ENCODE measurements at regions of chr3 and their contacts with region 1.

Region 1: GRCh38 chr3:114213627-114214541 is 23.5 kb downstream of the ZNF80 start:
- DNase-seq: peak; percentile 89
- H3K4me3 Mint-ChIP-seq: no peak overlapping the region
- H3K27ac Mint-ChIP-seq: no peak overlapping the region
- H3K4me1 Mint-ChIP-seq: peaks cover 4% of the 10 kb centered on the region
- H3K27me3 Mint-ChIP-seq: no peaks in the 10 kb centered on the region

Region 2: GRCh38 chr3:114056130-114057010 is 157.5 kb before region 1 on chr3 and contains the starts of genes CCDC191 and QTRT2:
- CTCF ChIA-PET with region 1: no interaction called
- POLR2A ChIA-PET with region 1: interaction called, 4 read pairs
- intact Hi-C with region 1: loop called (anchors 2 kb)
- DNase-seq: peak; percentile 99
- H3K4me3 Mint-ChIP-seq: peak within 1 kb of the TSS; percentile 94
- H3K27ac Mint-ChIP-seq: peak within 1 kb of the TSS; percentile 89
- H3K4me1 Mint-ChIP-seq: peaks cover 28% of the 10 kb centered on the region
- H3K27me3 Mint-ChIP-seq: no peaks in the 10 kb centered on the region
- total RNA-seq, gene CCDC191: 3.5 TPM
- total RNA-seq, gene QTRT2: 27.2 to 30.7 TPM

Region 3: GRCh38 chr3:114234745-114235144 is 20.9 kb after region 1 on chr3:
- CTCF ChIA-PET with region 1: interaction called, 5 read pairs
- POLR2A ChIA-PET with region 1: interaction called, 3 read pairs
- intact Hi-C with region 1: loop called (anchors 2 kb)
- DNase-seq: no peak
- H3K4me3 Mint-ChIP-seq: no peak overlapping the region
- H3K27ac Mint-ChIP-seq: peak overlapping the region; percentile 76
- H3K4me1 Mint-ChIP-seq: peaks cover 66% of the 10 kb centered on the region
- H3K27me3 Mint-ChIP-seq: no peaks in the 10 kb centered on the region

Region 4: DNA sequence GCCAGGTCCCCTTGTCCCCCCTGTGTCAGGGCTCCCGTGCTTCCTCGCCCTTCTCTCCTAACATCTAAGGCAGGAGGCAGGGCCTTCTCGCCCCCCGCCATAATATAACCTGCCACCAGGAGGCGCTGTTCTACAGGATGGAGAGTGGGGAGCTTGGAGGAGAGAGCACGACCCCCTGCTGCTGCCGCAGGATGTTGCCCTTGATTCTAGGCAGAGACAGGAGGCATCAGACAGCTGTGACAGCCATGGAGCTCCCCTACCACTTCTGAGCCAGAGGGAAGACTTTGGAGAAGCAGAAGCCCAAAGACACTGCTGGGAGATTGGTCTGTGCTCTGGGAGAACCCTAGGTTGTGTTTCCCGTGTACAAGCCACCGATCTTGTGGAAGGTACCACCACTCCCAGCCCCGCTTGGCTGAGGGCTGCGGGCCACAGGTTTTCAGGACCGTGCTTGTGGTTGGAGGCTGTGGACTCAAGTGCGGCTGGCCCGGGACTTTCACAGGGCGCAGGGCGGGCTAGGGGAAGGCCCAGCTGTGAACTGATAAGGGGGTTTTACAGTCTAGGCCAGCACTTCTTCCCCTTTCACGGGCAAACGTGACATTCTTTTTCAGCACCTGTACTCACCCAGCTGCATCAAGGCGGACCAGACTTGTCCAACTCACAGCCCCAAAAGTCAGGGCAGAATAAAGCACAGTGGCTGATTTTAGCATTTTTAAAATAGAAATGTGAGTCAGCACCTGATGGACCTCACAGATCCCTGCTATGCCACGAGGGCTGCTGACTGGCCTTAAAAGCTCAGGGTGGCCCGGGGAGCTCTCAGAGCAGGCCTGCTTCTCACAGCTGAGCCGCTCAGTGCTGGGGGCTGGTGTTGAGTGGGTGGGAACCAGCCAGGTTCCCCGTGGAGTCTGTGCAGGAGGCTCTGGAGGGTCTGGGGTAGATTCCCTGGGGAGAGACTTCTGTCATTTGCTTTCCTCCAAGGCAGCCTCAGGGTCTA is 77.3 kb after region 1 on chr3:
- CTCF ChIA-PET with region 1: interaction called, 37 read pairs
- POLR2A ChIA-PET with region 1: interaction called, 19 read pairs
- intact Hi-C with region 1: loop called (anchors 1 kb)
- DNase-seq: peak; percentile 96
- H3K4me3 Mint-ChIP-seq: peak overlapping the region; percentile 75
- H3K27ac Mint-ChIP-seq: peak overlapping the region; percentile 97
- H3K4me1 Mint-ChIP-seq: peaks cover 59% of the 10 kb centered on the region
- H3K27me3 Mint-ChIP-seq: no peaks in the 10 kb centered on the region

Region 5: GRCh38 chr3:114411811-114412803 is 198.2 kb after region 1 on chr3:
- CTCF ChIA-PET with region 1: no interaction called
- POLR2A ChIA-PET with region 1: no interaction called
- intact Hi-C with region 1: loop called (anchors 1 kb)
- DNase-seq: peak; percentile 57
- H3K4me3 Mint-ChIP-seq: no peak overlapping the region
- H3K27ac Mint-ChIP-seq: peak overlapping the region; percentile 44
- H3K4me1 Mint-ChIP-seq: peaks cover 24% of the 10 kb centered on the region
- H3K27me3 Mint-ChIP-seq: no peaks in the 10 kb centered on the region

Region 6: DNA sequence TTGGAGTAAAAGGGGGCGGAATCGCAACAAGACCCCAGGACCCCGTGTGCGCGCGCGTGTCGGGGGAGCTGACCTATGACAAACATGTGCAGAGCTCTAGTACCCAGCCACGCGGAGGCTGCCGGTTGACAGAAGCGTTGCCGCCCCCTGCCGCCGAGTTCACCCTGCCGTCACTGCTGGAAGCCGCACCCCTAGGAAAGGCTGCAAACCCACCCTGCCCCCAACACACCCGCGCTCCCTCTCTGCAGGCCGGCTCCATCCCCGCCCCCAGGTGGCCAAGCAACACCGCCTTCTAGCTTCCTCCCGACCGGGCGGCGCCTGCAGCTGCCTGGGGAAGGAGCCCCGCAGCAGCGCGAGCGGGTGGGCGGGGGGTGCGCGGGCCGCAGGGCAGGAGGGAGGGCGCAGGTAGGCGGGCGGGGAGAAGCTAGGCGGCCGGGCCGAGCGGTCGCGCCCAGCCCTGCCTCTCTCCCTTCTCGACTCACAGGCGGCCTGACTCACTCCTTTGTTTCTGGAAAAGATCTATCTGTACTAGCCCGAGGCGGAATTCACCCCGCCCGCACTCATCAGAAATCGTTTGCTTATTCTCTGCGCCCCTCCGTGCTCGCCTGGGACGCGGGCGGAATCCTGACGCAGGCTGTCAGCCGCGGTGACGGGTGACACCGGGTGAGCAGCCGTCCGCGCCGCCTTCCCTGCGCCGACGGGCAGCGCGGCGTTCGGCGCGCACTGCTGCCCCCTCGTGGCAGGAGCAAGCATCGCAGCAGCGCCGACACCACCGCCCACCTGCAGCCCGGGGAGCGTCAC is 1570.3 kb after region 1 on chr3:
- CTCF ChIA-PET with region 1: no interaction called
- POLR2A ChIA-PET with region 1: no interaction called
- intact Hi-C with region 1: loop called (anchors 1 kb)
- DNase-seq: peak; percentile 92
- H3K4me3 Mint-ChIP-seq: peak overlapping the region; percentile 88
- H3K27ac Mint-ChIP-seq: peak overlapping the region; percentile 94
- H3K4me1 Mint-ChIP-seq: peaks cover 19% of the 10 kb centered on the region
- H3K27me3 Mint-ChIP-seq: no peaks in the 10 kb centered on the region